Calu3 (cell line): ENCODE measurements at regions of chr3 and their contacts with region 1.

Region 1: GRCh38 chr3:163490119-163490518 is 1588.2 kb downstream of the SI start:
- DNase-seq: peak; percentile 87
- H3K4me3 Mint-ChIP-seq: no peak overlapping the region
- H3K27ac Mint-ChIP-seq: no peak overlapping the region
- H3K4me1 Mint-ChIP-seq: no peaks in the 10 kb centered on the region
- H3K27me3 Mint-ChIP-seq: no peaks in the 10 kb centered on the region
- CTCF ChIP-seq: peak; percentile 96

Region 2: DNA sequence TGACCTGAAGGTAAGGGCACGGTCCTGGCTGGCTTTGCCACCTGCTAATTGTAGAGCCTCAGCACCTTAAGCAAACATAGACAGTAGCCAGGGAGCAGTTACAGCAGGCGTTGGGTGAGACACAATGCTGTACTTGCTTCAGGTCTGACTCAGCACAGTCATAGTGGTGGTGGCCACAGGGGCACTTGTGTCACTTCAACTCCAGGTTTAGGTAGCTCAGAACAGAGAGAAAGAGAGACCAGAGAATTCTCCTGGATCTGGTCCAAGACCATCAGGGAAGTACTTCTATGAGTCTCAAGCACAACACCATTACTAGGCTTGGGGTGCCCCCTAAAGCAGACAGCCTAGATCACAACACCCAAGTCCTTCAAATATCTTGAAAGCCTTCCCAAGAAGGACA is 1789.1 kb before region 1 on chr3:
- CTCF ChIA-PET with region 1: no interaction called
- intact Hi-C with region 1: loop called (anchors 5 kb)
- DNase-seq: peak; percentile 63
- H3K4me3 Mint-ChIP-seq: no peak overlapping the region
- H3K27ac Mint-ChIP-seq: no peak overlapping the region
- H3K4me1 Mint-ChIP-seq: peaks cover 6% of the 10 kb centered on the region
- H3K27me3 Mint-ChIP-seq: no peaks in the 10 kb centered on the region
- CTCF ChIP-seq: no peak

Region 3: DNA sequence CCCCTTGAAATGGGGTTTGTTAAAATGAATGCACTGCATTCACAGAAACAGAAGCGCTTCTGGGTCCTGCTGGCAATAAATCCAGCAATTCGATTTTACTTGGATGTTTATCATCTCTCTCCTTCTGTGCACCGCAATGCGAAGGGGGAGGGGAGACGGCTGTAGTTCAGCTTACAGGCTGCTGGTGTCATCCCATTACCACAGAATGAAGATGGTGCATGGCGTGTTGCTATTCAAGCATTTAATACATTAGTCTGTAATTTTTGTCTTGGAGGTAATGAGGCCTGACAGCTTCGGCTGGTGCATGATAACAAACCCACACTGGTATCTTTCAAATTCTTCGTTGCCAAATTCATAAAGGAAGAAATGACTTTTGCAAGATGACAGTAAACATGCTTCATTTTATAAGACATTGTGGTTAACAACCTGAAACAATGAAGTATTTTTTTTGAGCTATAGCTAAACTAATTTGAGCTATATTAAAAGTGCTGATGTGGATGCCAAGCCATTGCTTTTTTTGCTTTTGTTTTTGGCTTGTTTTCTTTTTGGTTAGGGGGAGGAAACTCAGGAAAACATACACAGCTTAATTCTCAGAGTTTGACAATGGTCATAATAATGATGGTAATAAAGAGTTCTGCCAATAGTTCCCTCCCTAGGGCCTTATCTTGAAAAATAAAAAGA is 1575.2 kb before region 1 on chr3:
- CTCF ChIA-PET with region 1: interaction called, 5 read pairs
- intact Hi-C with region 1: loop called (anchors 5 kb)
- DNase-seq: peak; percentile 43
- H3K4me3 Mint-ChIP-seq: no peak overlapping the region
- H3K27ac Mint-ChIP-seq: no peak overlapping the region
- H3K4me1 Mint-ChIP-seq: peaks cover 22% of the 10 kb centered on the region
- H3K27me3 Mint-ChIP-seq: no peaks in the 10 kb centered on the region
- CTCF ChIP-seq: no peak

Region 4: DNA sequence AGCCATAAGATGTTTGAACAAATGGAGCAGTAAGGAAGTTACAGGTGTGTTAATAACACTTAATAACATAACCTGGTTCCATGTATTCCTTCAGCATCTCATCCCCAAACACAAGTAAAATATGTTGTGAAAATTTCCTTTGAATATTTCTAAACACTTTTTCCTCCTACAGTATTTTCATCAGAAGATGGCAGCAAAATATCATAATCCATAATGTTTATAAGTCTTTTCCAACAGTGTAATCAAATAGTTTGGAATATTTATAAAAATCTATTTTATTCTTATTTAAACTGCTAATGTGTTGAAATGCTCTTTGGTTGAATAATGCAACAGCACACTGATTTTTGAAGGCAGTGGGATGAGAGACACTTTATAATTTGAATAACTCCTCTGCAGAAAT is 973.0 kb before region 1 on chr3:
- CTCF ChIA-PET with region 1: no interaction called
- intact Hi-C with region 1: loop called (anchors 10 kb)
- DNase-seq: no peak
- H3K4me3 Mint-ChIP-seq: no peak overlapping the region
- H3K27ac Mint-ChIP-seq: no peak overlapping the region
- H3K4me1 Mint-ChIP-seq: no peaks in the 10 kb centered on the region
- H3K27me3 Mint-ChIP-seq: no peaks in the 10 kb centered on the region
- CTCF ChIP-seq: no peak

Region 5: GRCh38 chr3:163056874-163057497 is 433.1 kb before region 1 on chr3:
- CTCF ChIA-PET with region 1: interaction called, 7 read pairs
- intact Hi-C with region 1: loop called (anchors 1 kb)
- DNase-seq: peak; percentile 80
- H3K4me3 Mint-ChIP-seq: no peak overlapping the region
- H3K27ac Mint-ChIP-seq: no peak overlapping the region
- H3K4me1 Mint-ChIP-seq: no peaks in the 10 kb centered on the region
- H3K27me3 Mint-ChIP-seq: no peaks in the 10 kb centered on the region
- CTCF ChIP-seq: peak; percentile 69

Region 6: DNA sequence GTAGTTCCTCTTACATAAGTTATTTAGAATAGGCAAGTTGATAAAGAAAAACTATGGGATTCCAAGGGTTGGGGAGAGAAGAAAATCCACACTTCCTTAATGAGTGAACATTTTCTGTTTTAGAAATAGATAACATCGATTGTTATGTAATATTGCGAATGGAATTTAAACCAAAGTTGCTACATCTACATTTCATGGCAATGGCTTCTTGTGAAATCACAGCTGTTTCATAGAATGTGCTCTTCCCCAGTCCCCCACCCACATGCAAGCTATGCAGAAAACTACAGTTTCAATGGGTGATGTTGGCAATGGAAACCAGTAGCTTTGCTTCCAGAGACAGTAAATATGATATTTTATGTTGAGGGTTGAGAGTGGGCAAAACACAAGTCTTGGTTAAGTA is 51.3 kb before region 1 on chr3:
- CTCF ChIA-PET with region 1: no interaction called
- intact Hi-C with region 1: no loop called
- DNase-seq: no peak
- H3K4me3 Mint-ChIP-seq: no peak overlapping the region
- H3K27ac Mint-ChIP-seq: no peak overlapping the region
- H3K4me1 Mint-ChIP-seq: peaks cover 14% of the 10 kb centered on the region
- H3K27me3 Mint-ChIP-seq: no peaks in the 10 kb centered on the region
- CTCF ChIP-seq: no peak

Region 7: GRCh38 chr3:163476183-163476582 is 13.9 kb before region 1 on chr3:
- CTCF ChIA-PET with region 1: no interaction called
- intact Hi-C with region 1: no loop called
- DNase-seq: peak; percentile 16
- H3K4me3 Mint-ChIP-seq: no peak overlapping the region
- H3K27ac Mint-ChIP-seq: no peak overlapping the region
- H3K4me1 Mint-ChIP-seq: no peaks in the 10 kb centered on the region
- H3K27me3 Mint-ChIP-seq: no peaks in the 10 kb centered on the region
- CTCF ChIP-seq: peak; percentile 33